ENCODE measurements at regions of chr20 and their contacts with region 1.

Region 1: DNA sequence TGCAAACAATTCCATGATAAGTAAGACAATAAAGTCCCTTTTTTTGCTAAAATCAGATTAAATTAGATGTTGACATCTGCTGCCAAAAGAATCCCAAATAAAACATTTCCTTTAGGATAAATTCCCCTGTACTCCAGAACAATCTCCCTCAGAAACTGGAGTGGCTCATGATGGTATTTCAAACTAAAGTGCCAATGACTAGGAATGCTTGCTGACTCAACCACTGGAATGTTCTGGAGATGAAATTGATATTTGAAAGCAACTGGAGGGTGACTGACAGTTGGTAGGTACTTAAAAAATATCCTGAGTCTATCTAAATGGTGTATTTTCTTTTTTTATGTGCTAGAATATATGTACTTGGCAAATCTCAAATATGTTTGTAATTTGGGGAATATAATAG is 350.1 kb upstream of the TSHZ2 start:
- DNase-seq: no peak
- H3K4me3 ChIP-seq: no peak overlapping the region
- H3K27ac ChIP-seq: no peak overlapping the region
- H3K4me1 ChIP-seq: no peaks in the 10 kb centered on the region
- H3K27me3 ChIP-seq: no peaks in the 10 kb centered on the region
- CTCF ChIP-seq: no peak

Region 2: DNA sequence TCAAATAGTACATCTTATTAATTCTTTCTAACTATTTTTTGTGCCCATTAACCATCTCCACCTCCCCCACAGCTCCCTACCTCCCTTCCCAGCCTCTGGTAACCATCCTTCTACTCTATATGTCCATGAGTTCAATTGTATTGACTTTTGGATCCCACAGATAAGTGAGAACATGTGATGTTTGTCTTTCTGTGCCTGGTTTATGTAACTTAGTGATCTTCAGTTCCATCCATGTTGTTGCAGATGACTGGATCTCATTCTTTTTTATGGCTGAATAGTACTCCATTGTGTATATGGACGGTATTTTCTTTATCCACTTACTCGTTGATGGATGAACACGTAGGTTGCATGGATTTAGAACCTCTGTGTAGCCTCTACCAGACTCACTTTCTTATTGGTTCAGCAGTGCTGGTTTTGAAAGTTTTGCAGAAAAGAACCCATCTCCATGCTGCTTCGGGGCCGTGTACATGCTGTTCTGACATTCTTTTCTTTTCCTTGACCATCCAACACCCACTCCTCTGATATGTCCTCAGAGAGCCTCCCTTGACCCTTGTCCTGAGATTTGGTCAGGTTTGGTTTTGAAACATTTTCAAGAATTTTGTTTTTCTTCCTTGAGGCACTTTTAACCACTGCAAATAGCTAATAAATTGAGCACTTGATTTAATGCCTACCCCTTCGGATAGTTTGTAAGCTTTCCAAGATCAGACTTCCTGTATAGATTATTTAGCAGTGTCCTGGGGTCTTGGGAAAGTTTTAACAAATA is 199.3 kb before region 1 on chr20:
- intact Hi-C with region 1: no loop called
- DNase-seq: no peak
- H3K4me3 ChIP-seq: no peak overlapping the region
- H3K27ac ChIP-seq: no peak overlapping the region
- H3K4me1 ChIP-seq: no peaks in the 10 kb centered on the region
- H3K27me3 ChIP-seq: no peaks in the 10 kb centered on the region
- CTCF ChIP-seq: no peak

Region 3: GRCh38 chr20:52552181-52552872 is 69.8 kb before region 1 on chr20:
- intact Hi-C with region 1: loop called (anchors 2 kb)
- DNase-seq: no peak
- H3K4me3 ChIP-seq: no peak overlapping the region
- H3K27ac ChIP-seq: no peak overlapping the region
- H3K4me1 ChIP-seq: no peaks in the 10 kb centered on the region
- H3K27me3 ChIP-seq: no peaks in the 10 kb centered on the region
- CTCF ChIP-seq: no peak